WTC11 (cell line): ENCODE measurements at regions of chr11 and their contacts with region 1.

Region 1: GRCh38 chr11:43557553-43558110 is 122.9 kb upstream of the HSD17B12 start:
- DNase-seq: no peak
- ATAC-seq: peak; percentile 63
- H3K4me3 Mint-ChIP-seq: peak overlapping the region; percentile 69
- H3K27ac Mint-ChIP-seq: no peak overlapping the region
- H3K4me1 Mint-ChIP-seq: peaks cover 58% of the 10 kb centered on the region
- H3K27me3 Mint-ChIP-seq: peaks cover 38% of the 10 kb centered on the region
- CTCF ChIP-seq: no peak

Region 2: DNA sequence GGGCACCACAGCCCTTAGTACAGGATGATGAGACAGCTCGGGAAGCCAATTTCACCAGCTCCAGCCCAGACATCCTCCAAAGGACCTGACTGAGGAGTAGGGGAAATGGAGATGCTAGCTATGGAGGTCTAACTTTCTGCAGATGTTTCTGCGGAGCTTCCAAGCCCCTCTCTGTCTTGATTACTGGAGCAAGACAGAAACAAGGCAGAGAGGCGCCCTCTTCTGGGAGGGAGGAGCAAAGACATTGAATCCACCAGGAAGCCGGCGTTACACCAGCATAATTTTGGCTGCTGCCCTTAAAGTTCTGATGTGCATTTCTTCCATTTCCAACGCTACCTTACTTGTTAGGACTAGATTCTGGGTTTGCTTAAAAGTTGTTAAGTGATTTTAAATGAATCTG is 15.6 kb after region 1 on chr11:
- CTCF ChIA-PET with region 1: interaction called, 106 read pairs
- POLR2A ChIA-PET with region 1: interaction called, 4 read pairs
- DNase-seq: peak; percentile 64
- ATAC-seq: peak; percentile 53
- H3K4me3 Mint-ChIP-seq: no peak overlapping the region
- H3K27ac Mint-ChIP-seq: no peak overlapping the region
- H3K4me1 Mint-ChIP-seq: peaks cover 32% of the 10 kb centered on the region
- H3K27me3 Mint-ChIP-seq: peaks cover 100% of the 10 kb centered on the region
- CTCF ChIP-seq: peak; percentile 57; the same call in 1 of the 2 replicates